Colonic mucosa (tissue), 4 donors: ENCODE measurements at regions of chr14 and their contacts with region 1.

Region 1: GRCh38 chr14:56659964-56660551 is 80.5 kb downstream of the TMEM260 start:
- DNase-seq: no peak
- H3K4me3 ChIP-seq: no peak overlapping the region
- H3K27ac ChIP-seq: no peak overlapping the region
- H3K4me1 ChIP-seq: no peaks in the 10 kb centered on the region
- H3K27me3 ChIP-seq: no peaks in the 10 kb centered on the region
- CTCF ChIP-seq: peak; percentile 43

Region 2: DNA sequence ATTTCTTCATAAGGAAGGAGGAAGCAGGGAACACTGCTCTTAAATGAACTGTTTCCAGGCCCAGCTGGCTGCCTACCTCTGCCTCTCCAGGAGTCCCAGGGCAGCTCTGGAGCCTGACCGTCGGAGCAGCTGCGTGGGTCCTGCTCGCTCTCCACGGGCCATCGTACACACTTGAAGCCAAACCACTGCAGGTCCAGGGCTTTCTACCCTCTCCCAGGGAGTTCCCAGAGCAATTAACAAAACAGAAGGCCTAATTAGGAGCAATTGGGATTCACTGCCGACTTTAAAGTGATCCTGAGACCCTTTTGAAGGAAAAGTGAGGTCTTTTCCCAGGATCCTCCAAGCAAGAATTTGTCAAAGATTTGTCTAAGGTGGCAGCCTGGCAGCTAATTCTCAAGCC is 73.3 kb after region 1 on chr14:
- intact Hi-C with region 1: no loop called
- DNase-seq: no peak
- H3K4me3 ChIP-seq: no peak overlapping the region
- H3K27ac ChIP-seq: no peak overlapping the region
- H3K4me1 ChIP-seq: no peaks in the 10 kb centered on the region
- H3K27me3 ChIP-seq: no peaks in the 10 kb centered on the region
- CTCF ChIP-seq: no peak

Region 3: GRCh38 chr14:56754981-56755401 is 94.9 kb after region 1 on chr14:
- intact Hi-C with region 1: no loop called
- DNase-seq: no peak
- H3K4me3 ChIP-seq: no peak overlapping the region
- H3K27ac ChIP-seq: no peak overlapping the region
- H3K4me1 ChIP-seq: no peaks in the 10 kb centered on the region
- H3K27me3 ChIP-seq: no peaks in the 10 kb centered on the region
- CTCF ChIP-seq: no peak

Region 4: GRCh38 chr14:56797569-56798446 is 137.8 kb after region 1 on chr14:
- intact Hi-C with region 1: no loop called
- DNase-seq: no peak
- H3K4me3 ChIP-seq: peak overlapping the region; percentile 7
- H3K27ac ChIP-seq: no peak overlapping the region
- H3K4me1 ChIP-seq: no peaks in the 10 kb centered on the region
- H3K27me3 ChIP-seq: peaks cover 87% of the 10 kb centered on the region
- CTCF ChIP-seq: no peak

Region 5: GRCh38 chr14:56874375-56874774 is 214.3 kb after region 1 on chr14:
- intact Hi-C with region 1: loop called (anchors 5 kb)
- DNase-seq: peak; percentile 47
- H3K4me3 ChIP-seq: no peak overlapping the region
- H3K27ac ChIP-seq: no peak overlapping the region
- H3K4me1 ChIP-seq: no peaks in the 10 kb centered on the region
- H3K27me3 ChIP-seq: no peaks in the 10 kb centered on the region
- CTCF ChIP-seq: peak; percentile 36

Region 6: DNA sequence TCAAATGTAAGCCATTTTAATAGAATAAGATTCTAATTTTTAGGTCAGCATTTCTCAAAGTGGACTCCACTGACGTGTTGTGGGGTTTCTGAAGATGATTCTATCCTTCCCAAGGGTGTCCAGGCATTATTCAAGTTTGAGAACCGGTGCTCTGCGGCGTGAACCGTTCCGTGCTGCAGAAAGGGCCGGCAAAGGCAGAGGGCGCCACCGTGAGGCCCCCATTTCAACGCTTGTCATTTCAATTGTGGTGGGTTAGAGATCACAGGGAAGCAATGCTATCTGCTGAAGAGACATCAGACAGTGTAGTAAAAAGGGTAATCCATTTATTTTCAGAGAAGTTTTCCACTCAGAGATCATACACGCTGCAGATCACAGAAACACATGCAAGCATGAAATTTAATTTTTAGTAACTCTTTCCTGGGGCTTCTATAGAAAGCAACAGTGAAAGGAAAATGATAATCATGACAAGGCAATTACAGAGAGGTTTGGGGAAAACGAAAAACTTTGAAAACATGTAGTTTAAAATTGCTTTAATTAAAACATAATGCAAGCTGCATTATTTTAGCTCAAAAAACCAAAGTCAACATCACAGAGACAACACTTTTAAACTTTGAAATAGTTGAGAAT is 406.9 kb after region 1 on chr14:
- intact Hi-C with region 1: loop called (anchors 10 kb)
- DNase-seq: peak; percentile 33
- H3K4me3 ChIP-seq: no peak overlapping the region
- H3K27ac ChIP-seq: no peak overlapping the region
- H3K4me1 ChIP-seq: no peaks in the 10 kb centered on the region
- H3K27me3 ChIP-seq: no peaks in the 10 kb centered on the region
- CTCF ChIP-seq: peak; percentile 42